SK-N-SH (cell line): ENCODE measurements at regions of chr4 and their contacts with region 1.

Region 1: GRCh38 chr4:177047070-177047850 is 254.5 kb upstream of the VEGFC start:
- DNase-seq: peak; percentile 49
- H3K4me3 ChIP-seq: peak overlapping the region in 1 of 2 experiments; percentile 28; a peak in 1 of 4 replicates
- H3K27ac ChIP-seq: peak overlapping the region in 1 of 2 experiments; percentile 20; a peak in 1 of 4 replicates
- H3K4me1 ChIP-seq: no peaks in the 10 kb centered on the region
- H3K27me3 ChIP-seq: no peaks in the 10 kb centered on the region
- CTCF ChIP-seq: peak; percentile 96
- EP300 ChIP-seq: no peak
- RAD21 ChIP-seq: peak; percentile 76

Region 2: GRCh38 chr4:176377780-176378179 is 669.5 kb before region 1 on chr4:
- CTCF ChIA-PET with region 1: interaction called, 27 read pairs
- POLR2A ChIA-PET with region 1: no interaction called
- DNase-seq: peak; percentile 5
- H3K4me3 ChIP-seq: no peak overlapping the region
- H3K27ac ChIP-seq: peak overlapping the region in 1 of 2 experiments; percentile 62; a peak in 1 of 4 replicates
- H3K4me1 ChIP-seq: no peaks in the 10 kb centered on the region; a peak in 2 of 4 replicates
- H3K27me3 ChIP-seq: no peaks in the 10 kb centered on the region
- CTCF ChIP-seq: peak; percentile 77
- EP300 ChIP-seq: no peak
- RAD21 ChIP-seq: peak; percentile 72

Region 3: GRCh38 chr4:176548571-176548970 is 498.7 kb before region 1 on chr4:
- CTCF ChIA-PET with region 1: no interaction called
- POLR2A ChIA-PET with region 1: no interaction called
- DNase-seq: no peak
- H3K4me3 ChIP-seq: peak overlapping the region in 1 of 2 experiments; percentile 13; a peak in 1 of 4 replicates
- H3K27ac ChIP-seq: peak overlapping the region; percentile 79 to 85; a peak in 3 of 4 replicates
- H3K4me1 ChIP-seq: peaks cover 0 to 11% of the 10 kb centered on the region in 2 experiments; a peak in 2 of 4 replicates
- H3K27me3 ChIP-seq: peaks cover 14% of the 10 kb centered on the region; the same call in 1 of the 2 replicates
- CTCF ChIP-seq: no peak
- EP300 ChIP-seq: no peak
- RAD21 ChIP-seq: no peak

Region 4: GRCh38 chr4:177008836-177009501 is 38.3 kb before region 1 on chr4:
- CTCF ChIA-PET with region 1: interaction called, 12 read pairs
- POLR2A ChIA-PET with region 1: no interaction called
- DNase-seq: no peak
- H3K4me3 ChIP-seq: no peak overlapping the region
- H3K27ac ChIP-seq: peak overlapping the region; percentile 53 to 94; a peak in 3 of 4 replicates
- H3K4me1 ChIP-seq: peaks cover 0 to 18% of the 10 kb centered on the region in 2 experiments; a peak in 3 of 4 replicates
- H3K27me3 ChIP-seq: no peaks in the 10 kb centered on the region
- CTCF ChIP-seq: peak; percentile 31
- EP300 ChIP-seq: no peak
- RAD21 ChIP-seq: no peak

Region 5: GRCh38 chr4:177033135-177033534 is 14.1 kb before region 1 on chr4:
- CTCF ChIA-PET with region 1: interaction called, 33 read pairs
- POLR2A ChIA-PET with region 1: no interaction called
- DNase-seq: no peak
- H3K4me3 ChIP-seq: no peak overlapping the region
- H3K27ac ChIP-seq: no peak overlapping the region
- H3K4me1 ChIP-seq: no peaks in the 10 kb centered on the region
- H3K27me3 ChIP-seq: no peaks in the 10 kb centered on the region
- CTCF ChIP-seq: peak; percentile 37
- EP300 ChIP-seq: no peak
- RAD21 ChIP-seq: no peak

Region 6: GRCh38 chr4:177064729-177065394 is 17.6 kb after region 1 on chr4:
- CTCF ChIA-PET with region 1: interaction called, 53 read pairs
- POLR2A ChIA-PET with region 1: no interaction called
- DNase-seq: no peak
- H3K4me3 ChIP-seq: no peak overlapping the region
- H3K27ac ChIP-seq: no peak overlapping the region
- H3K4me1 ChIP-seq: no peaks in the 10 kb centered on the region
- H3K27me3 ChIP-seq: no peaks in the 10 kb centered on the region
- CTCF ChIP-seq: no peak
- EP300 ChIP-seq: no peak
- RAD21 ChIP-seq: no peak

Region 7: DNA sequence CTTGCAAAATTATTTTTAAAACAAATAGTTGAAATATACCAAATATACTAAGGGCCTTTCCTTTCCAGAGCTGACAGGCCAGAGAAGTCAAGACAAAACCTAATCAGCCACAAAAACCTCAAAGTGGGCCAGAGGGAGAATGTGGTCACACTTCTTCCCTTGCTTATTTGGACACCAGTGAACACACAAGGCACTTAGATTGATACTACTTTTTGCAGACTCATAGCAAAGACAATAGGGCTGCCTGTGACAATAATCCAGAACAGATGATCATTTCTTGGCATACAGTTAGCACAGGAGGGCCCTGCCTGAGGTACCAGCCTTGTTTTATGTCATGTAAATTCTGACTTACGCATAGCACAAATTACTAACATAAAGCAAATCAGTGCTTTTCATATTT is 46.7 kb after region 1 on chr4:
- CTCF ChIA-PET with region 1: interaction called, 32 read pairs
- POLR2A ChIA-PET with region 1: no interaction called
- DNase-seq: peak; percentile 15
- H3K4me3 ChIP-seq: no peak overlapping the region
- H3K27ac ChIP-seq: peak overlapping the region in 1 of 2 experiments; percentile 78; a peak in 2 of 4 replicates
- H3K4me1 ChIP-seq: peaks cover 6 to 8% of the 10 kb centered on the region in 2 experiments; a peak in 3 of 4 replicates
- H3K27me3 ChIP-seq: no peaks in the 10 kb centered on the region
- CTCF ChIP-seq: no peak
- EP300 ChIP-seq: peak in 1 of 2 experiments; percentile 23; a peak in 1 of 4 replicates
- RAD21 ChIP-seq: no peak

Region 8: GRCh38 chr4:178339770-178340169 is 1292.5 kb after region 1 on chr4:
- CTCF ChIA-PET with region 1: no interaction called
- POLR2A ChIA-PET with region 1: no interaction called
- DNase-seq: no peak
- H3K4me3 ChIP-seq: no peak overlapping the region
- H3K27ac ChIP-seq: no peak overlapping the region
- H3K4me1 ChIP-seq: no peaks in the 10 kb centered on the region
- H3K27me3 ChIP-seq: no peaks in the 10 kb centered on the region
- CTCF ChIP-seq: no peak
- EP300 ChIP-seq: no peak
- RAD21 ChIP-seq: no peak